ENCODE measurements at regions of chr2 and their contacts with region 1.

Region 1: GRCh38 chr2:186641807-186642321 is 52.0 kb upstream of the FAM171B start:
- DNase-seq: peak; percentile 75

Region 2: DNA sequence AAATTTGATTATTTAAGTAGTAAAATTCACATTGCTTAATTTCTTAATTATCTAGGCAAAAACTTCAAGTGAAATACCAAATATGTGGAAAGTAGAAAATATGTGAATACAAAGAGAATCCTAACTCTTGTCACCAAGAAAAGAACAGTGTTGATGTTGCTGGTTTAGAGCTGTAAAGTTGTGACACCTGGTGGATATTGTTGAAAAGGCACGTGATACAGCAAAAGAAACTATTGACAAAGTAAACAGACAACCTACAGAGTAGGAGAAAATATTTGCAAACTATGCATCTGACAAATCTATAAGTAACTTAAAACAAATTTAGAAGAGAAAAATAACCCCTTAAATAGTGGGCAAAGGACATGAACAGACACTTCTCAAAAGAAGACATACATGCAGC is 181.4 kb before region 1 on chr2:
- in situ Hi-C with region 1: no loop called
- DNase-seq: peak; percentile 26

Region 3: GRCh38 chr2:186503848-186504606 is 137.8 kb before region 1 on chr2:
- in situ Hi-C with region 1: loop called (anchors 25 kb)
- DNase-seq: peak; percentile 57

Region 4: GRCh38 chr2:186780701-186781348 is 139.0 kb after region 1 on chr2:
- in situ Hi-C with region 1: no loop called
- DNase-seq: peak; percentile 68

Region 5: DNA sequence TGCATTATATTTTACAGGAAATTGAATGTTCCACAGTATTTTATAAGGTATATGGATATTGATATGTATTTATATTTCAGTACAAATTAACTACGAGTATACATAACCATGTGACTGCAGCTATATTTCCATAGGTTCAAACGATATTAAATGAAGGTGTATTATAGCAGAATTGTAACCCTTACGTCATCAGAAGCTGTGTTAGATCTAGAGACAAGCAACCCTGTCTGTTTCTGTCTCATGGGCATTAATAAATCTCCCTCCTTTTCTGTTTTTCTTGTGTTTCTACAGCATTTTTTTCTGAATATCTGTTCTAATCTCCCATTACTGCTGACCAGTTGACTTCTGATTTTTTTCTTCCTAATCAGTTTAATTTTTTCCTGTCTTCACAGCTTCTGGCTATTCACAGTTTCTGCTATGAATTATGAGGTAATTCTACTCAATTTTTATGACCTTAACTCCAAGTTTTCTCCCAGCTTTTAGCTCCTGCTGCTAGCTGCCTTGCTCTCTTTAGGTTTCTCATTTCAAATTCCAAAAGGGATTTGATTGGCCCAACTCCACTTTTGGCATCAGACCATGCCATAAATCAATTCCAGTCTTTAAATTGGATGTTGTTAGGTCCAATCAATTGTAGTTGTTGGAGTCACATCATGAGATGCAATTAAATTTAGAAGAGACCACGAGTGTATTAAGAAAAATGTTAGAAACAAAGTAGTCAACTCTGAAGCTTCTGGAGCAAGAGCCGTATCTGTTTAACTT is 484.6 kb after region 1 on chr2:
- in situ Hi-C with region 1: no loop called
- DNase-seq: no peak

Measured in SK-MEL-5 (cell line).